Psoas muscle (tissue), 8 donors: ENCODE measurements at regions of chr13 and their contacts with region 1.

Region 1: GRCh38 chr13:40974460-40975407 is 44.4 kb downstream of the ELF1 start:
- DNase-seq: no peak
- ATAC-seq: peak; percentile 69 to 82 (median 76)
- H3K4me3 ChIP-seq: no peak overlapping the region
- H3K27ac ChIP-seq: no peak overlapping the region
- H3K4me1 ChIP-seq: peaks cover 59% of the 10 kb centered on the region
- H3K27me3 ChIP-seq: no peaks in the 10 kb centered on the region
- CTCF ChIP-seq: peak; percentile 42

Region 2: DNA sequence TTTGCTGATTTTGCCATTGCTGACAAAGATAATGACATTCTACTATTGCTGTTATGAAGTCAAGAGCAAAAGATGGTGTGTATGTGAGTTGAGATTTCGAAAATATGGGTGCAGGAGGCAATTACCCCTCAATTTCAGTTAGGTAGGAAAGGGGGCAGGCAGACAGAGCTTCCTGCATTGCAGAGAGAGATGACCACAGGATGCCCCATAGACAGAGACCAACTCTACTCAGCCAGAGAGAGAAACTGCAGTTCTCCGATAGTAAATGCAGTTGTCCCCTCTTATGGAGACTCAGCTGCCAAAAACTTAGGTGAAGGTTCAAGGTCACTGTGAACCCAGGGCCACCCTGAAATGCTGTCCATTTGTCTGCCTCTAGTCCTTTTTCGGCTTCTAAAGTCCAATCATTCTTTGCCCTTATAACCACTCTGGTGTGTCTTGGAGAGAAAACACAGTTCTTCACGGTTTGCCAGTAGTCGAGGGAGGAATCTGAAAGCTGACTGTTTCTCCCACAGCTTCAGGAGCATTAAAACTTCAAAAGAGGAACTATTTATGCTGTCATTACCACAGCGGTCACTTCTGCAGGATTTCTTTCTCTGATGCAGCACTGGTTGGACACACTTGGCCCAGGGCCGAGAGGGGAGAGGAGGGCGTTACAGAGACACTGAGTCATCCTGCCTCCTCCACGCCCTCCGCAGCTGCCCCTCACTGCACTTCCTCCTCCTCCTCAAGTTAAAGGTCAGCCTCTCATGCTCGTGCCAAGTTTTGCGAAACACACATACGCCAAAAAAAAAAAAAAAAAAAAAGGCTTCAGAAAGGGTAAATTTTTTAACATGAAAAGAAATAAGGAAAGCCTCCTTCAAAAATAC is 572.6 kb before region 1 on chr13:
- intact Hi-C with region 1: no loop called
- DNase-seq: peak; percentile 98
- ATAC-seq: peak; percentile 89 to 95 (median 92)
- H3K4me3 ChIP-seq: peak overlapping the region; percentile 37
- H3K27ac ChIP-seq: peak overlapping the region; percentile 50
- H3K4me1 ChIP-seq: peaks cover 32% of the 10 kb centered on the region
- H3K27me3 ChIP-seq: no peaks in the 10 kb centered on the region
- CTCF ChIP-seq: no peak

Region 3: DNA sequence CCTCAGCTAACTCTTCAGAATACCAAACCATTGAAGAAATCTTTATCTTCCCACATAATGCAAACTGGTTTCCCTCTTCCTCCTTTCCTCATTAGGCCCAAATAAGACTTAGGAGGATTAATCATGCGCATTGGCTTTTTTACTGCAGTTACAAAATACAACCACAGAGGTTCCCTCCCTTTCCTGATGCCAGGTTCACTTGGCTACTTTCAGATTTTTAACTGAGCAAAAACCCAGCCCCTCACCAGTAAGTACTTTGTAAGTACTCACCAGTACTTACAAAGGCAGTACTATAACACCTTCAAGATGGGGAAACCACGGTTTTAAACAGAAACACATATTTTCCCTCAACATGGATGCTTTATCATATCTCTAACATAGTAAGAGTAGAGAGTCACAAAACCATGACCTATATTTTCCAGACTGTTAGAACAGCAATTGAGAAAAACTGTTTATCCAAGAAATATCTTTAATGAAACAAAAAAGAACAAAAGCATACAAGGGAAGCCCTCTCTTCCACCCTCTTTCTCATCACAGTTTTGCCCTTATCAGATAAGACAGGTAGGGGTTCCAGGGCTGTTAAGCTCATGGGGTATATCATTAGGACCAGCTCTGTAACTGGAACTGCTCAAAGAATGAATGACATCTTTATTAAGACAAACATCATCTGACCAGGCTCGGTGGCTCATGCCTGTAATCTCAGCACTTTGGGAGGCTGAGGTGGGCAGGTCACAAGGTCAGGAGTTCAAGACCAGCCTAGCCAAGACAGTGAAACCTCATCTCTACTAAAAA is 321.0 kb before region 1 on chr13:
- intact Hi-C with region 1: no loop called
- DNase-seq: no peak
- ATAC-seq: no peak
- H3K4me3 ChIP-seq: no peak overlapping the region
- H3K27ac ChIP-seq: no peak overlapping the region
- H3K4me1 ChIP-seq: peaks cover 64% of the 10 kb centered on the region
- H3K27me3 ChIP-seq: no peaks in the 10 kb centered on the region
- CTCF ChIP-seq: no peak

Region 4: DNA sequence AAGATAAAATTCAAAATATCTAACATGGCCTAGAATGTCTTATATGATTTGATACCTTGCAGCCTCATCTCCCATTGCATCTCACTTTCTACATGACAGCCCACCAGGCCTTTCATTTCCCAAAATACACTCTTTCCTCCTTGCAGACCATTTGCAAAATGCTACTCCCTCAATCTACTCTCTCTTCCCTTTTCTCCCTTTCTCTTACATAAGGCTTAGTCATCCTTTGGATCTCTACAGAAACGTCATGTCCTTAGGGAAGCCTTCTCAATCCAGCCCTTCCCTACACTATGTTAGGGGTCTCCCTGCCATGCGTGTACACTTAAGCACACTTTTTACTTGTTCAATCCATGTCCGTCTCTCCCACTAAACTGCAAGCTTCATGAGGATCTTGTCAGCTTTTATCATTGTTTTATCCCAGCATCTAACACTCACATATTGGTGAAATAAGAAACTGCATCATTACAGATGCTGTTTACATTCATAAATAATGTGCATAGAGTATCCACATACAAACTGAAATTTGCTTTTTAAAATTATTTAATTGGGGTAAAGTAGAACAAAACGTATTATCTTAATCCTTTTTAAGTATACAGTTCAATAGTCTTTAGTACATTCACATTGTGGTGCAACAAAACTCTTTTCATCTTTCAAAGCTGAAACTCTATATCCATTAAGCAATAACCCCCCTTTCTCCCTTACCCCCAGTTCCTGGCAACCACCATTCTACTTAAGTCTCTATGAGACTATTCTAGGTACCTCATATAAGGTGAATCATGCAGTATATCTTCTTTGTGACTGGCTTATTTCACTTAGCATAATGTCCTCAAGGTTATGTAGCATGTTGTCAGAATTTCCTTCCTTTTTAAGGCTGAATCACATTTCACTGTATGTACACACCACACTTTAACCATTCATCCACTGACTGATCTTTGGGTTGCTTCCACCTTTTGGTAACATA is 75.0 kb after region 1 on chr13:
- intact Hi-C with region 1: loop called in 1 of 2 experiments (anchors 2 kb)
- DNase-seq: no peak
- ATAC-seq: peak; percentile 48 to 88 (median 86)
- H3K4me3 ChIP-seq: no peak overlapping the region
- H3K27ac ChIP-seq: no peak overlapping the region
- H3K4me1 ChIP-seq: peaks cover 53% of the 10 kb centered on the region
- H3K27me3 ChIP-seq: no peaks in the 10 kb centered on the region
- CTCF ChIP-seq: no peak

Region 5: GRCh38 chr13:41054919-41055619 is 80.3 kb after region 1 on chr13:
- intact Hi-C with region 1: loop called in 1 of 2 experiments (anchors 5 kb)
- DNase-seq: no peak
- ATAC-seq: no peak
- H3K4me3 ChIP-seq: no peak overlapping the region
- H3K27ac ChIP-seq: peak overlapping the region; percentile 11
- H3K4me1 ChIP-seq: peaks cover 82% of the 10 kb centered on the region
- H3K27me3 ChIP-seq: no peaks in the 10 kb centered on the region
- CTCF ChIP-seq: no peak

Region 6: DNA sequence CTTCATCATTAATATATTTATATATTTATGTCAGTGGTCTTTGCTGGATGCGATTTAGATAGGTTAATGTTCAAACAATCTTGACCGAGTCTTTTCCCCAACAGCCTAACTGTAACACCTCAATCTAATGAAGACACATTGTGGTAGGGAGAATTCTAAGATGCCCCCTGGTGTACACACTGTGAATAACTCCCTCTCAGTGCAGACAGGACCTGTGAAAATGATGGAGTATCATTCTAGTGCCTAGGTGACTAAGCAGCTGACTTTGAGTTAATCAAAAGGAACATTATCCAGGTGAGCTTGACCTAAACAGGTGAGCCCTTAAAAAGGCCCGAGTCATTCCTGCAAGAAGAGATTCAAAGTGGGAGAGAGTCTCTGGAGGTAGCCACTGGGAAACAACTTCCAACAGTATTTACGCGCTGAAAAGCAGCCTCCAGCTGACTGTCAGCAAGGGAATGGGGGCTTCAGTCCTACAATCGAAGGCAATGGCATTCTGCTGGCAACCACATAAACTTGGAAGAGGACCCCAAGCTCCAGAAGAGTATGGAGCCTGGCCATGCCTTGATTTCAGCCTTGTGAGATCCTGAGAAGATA is 247.6 kb after region 1 on chr13:
- intact Hi-C with region 1: loop called in 1 of 2 experiments (anchors 10 kb)
- DNase-seq: no peak
- ATAC-seq: peak; percentile 74 to 94 (median 87)
- H3K4me3 ChIP-seq: no peak overlapping the region
- H3K27ac ChIP-seq: no peak overlapping the region
- H3K4me1 ChIP-seq: no peaks in the 10 kb centered on the region
- H3K27me3 ChIP-seq: no peaks in the 10 kb centered on the region
- CTCF ChIP-seq: peak; percentile 81